Activated CD8-positive, alpha-beta T cell treated with anti-CD3 and anti-CD28 coated beads for 36 hours (primary cell): ENCODE measurements at regions of chr10 and their contacts with region 1.

Region 1: DNA sequence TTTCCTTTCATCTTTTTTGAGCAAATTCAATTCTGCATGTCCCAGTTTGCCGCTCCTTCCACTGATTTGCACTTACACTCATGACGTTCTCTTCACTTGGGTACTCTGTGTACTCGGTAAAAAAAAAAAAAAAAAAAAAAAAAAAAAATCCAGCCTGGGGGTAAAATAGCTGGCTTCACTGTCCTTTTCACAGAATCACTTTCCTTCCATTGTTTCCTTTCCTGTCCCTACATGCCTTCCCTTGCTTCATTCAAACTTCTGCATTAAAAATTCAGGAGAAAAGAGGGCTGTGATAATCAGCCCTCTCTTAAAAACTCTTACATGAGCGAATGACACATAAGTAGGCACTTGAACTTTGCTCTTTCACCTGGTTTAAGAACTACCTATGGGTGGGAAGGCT is 8.7 kb downstream of the ANKRD1 start:
- DNase-seq: no peak
- ATAC-seq: no peak
- H3K4me3 Mint-ChIP-seq: no peak overlapping the region
- H3K27ac Mint-ChIP-seq: no peak overlapping the region
- H3K4me1 Mint-ChIP-seq: peaks cover 2% of the 10 kb centered on the region
- H3K27me3 Mint-ChIP-seq: no peaks in the 10 kb centered on the region
- CTCF ChIP-seq: no peak

Region 2: GRCh38 chr10:90787393-90788198 is 124.6 kb before region 1 on chr10:
- CTCF ChIA-PET with region 1: no interaction called
- POLR2A ChIA-PET with region 1: no interaction called
- intact Hi-C with region 1: no loop called
- DNase-seq: peak; percentile 35
- ATAC-seq: no peak
- H3K4me3 Mint-ChIP-seq: no peak overlapping the region
- H3K27ac Mint-ChIP-seq: no peak overlapping the region
- H3K4me1 Mint-ChIP-seq: no peaks in the 10 kb centered on the region
- H3K27me3 Mint-ChIP-seq: peaks cover 4% of the 10 kb centered on the region
- CTCF ChIP-seq: peak; percentile 68

Region 3: DNA sequence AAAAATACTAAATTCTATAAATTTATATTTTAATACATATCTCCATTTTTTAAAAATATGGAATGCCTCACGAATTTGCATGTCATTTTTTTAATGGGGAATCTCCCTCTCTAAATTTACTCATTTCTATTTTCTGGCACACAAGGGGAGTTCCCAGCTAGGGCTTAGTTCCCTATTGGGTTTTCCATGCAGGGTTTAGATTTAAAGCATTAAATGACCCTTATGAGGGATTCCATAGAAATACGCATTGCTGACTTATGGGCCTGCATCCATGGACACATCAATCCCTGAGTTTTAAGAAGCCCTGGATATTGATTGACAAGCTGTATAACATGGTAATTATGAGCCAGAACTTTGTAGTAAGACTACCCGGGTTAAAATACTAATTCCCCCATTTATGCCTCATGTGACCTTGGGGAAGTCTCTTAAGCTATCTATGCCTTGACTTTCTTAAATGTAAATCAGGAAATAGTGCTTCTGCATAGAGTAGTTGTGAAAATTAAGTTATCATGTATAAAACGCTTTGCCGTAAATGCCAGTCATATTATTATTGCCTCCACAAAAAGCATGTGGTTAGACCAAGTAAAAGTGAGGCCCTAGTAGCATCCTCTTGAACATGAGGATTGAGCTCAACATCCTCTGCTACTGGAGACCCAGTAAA is 87.5 kb after region 1 on chr10:
- CTCF ChIA-PET with region 1: interaction called, 21 read pairs
- POLR2A ChIA-PET with region 1: no interaction called
- intact Hi-C with region 1: no loop called
- DNase-seq: no peak
- ATAC-seq: no peak
- H3K4me3 Mint-ChIP-seq: no peak overlapping the region
- H3K27ac Mint-ChIP-seq: no peak overlapping the region
- H3K4me1 Mint-ChIP-seq: peaks cover under 1% of the 10 kb centered on the region
- H3K27me3 Mint-ChIP-seq: peaks cover under 1% of the 10 kb centered on the region
- CTCF ChIP-seq: no peak